MCF 10A (cell line): ENCODE measurements at regions of chr19 and their contacts with region 1.

Region 1: DNA sequence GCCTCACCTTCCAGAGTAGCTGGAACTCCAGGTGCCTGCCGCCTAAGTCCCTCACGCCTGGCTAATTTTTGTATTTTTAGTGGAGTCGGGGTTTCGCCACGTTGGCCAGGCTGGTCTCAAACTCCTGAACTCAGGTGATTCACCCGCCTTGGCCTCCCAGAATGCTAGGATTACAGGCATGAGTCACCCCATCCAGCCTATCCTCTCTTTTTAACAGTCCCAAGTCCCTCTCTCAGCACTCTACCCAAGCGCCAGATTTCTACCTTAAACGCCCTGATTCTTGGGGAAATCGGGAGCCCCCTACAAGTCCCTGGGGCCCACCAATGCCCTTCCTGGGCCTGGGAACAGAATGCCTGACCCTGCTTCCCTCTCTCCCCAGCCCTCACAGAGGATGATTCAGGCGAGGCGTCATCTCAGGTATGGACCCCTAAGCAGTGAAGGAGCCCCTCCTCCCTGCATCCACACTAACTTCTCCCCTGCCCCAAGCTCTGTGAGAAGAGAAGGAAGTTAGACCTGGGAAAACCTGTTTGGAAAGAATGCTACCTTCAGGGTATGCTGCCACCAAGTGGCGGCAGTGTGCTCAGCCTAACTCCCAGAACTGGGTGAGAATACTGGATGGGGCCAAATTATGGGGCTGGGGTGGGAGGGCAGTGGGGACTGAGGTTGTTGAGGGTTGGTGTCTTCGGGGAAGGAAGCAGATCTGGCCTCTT is 20.8 kb upstream of the EBI3 start:
- DNase-seq: peak; percentile 50
- H3K4me3 Mint-ChIP-seq: no peak overlapping the region
- H3K27ac Mint-ChIP-seq: no peak overlapping the region
- H3K4me1 Mint-ChIP-seq: peaks cover 10% of the 10 kb centered on the region
- H3K27me3 Mint-ChIP-seq: peaks cover 17% of the 10 kb centered on the region
- CTCF ChIP-seq: peak; percentile 1

Region 2: GRCh38 chr19:4065430-4066175 is 142.9 kb before region 1 on chr19:
- CTCF ChIA-PET with region 1: no interaction called
- POLR2A ChIA-PET with region 1: no interaction called
- intact Hi-C with region 1: loop called (anchors 10 kb)
- DNase-seq: peak; percentile 95
- H3K4me3 Mint-ChIP-seq: peak overlapping the region; percentile 79
- H3K27ac Mint-ChIP-seq: no peak overlapping the region
- H3K4me1 Mint-ChIP-seq: peaks cover 5% of the 10 kb centered on the region
- H3K27me3 Mint-ChIP-seq: no peaks in the 10 kb centered on the region
- CTCF ChIP-seq: no peak

Region 3: GRCh38 chr19:4108767-4109625 is 99.5 kb before region 1 on chr19:
- CTCF ChIA-PET with region 1: no interaction called
- POLR2A ChIA-PET with region 1: no interaction called
- intact Hi-C with region 1: no loop called
- DNase-seq: no peak
- H3K4me3 Mint-ChIP-seq: no peak overlapping the region
- H3K27ac Mint-ChIP-seq: no peak overlapping the region
- H3K4me1 Mint-ChIP-seq: peaks cover 4% of the 10 kb centered on the region
- H3K27me3 Mint-ChIP-seq: no peaks in the 10 kb centered on the region
- CTCF ChIP-seq: no peak